ENCODE measurements at regions of chr1 and their contacts with region 1.

Region 1: GRCh38 chr1:150578965-150579798 is at the start of gene MCL1:
- DNase-seq: peak; percentile 94

Region 2: DNA sequence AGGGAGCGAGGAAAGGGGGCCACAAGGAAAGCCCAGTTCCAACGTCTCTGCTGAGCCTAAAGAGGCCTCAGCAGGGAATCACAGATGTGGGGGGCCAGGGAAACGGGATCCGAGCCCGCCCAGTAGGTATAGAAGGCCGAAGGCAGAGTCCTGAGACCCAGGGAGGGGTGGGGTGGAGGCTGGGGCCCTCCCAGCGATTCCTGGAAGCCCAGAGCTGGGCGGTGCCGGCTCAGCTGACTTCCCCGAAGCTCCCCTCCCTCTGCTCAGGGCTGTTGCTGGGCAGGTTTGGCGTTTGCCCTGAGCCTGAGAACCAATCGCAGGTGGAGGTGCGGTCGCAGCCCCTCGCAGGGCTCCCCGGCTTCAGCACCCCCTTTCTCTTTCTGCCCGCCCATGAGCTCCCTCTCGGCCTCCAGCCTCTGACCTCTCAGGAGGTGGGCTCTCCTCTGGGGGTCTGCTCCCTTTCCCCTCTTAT is 17.2 kb before region 1 on chr1:
- CTCF ChIA-PET with region 1: interaction called, 6 read pairs
- POLR2A ChIA-PET with region 1: interaction called, 260 read pairs
- DNase-seq: peak; percentile 89

Region 3: GRCh38 chr1:150596095-150596892 is 17.1 kb after region 1 on chr1:
- CTCF ChIA-PET with region 1: no interaction called
- POLR2A ChIA-PET with region 1: interaction called, 42 read pairs
- DNase-seq: no peak

Region 4: DNA sequence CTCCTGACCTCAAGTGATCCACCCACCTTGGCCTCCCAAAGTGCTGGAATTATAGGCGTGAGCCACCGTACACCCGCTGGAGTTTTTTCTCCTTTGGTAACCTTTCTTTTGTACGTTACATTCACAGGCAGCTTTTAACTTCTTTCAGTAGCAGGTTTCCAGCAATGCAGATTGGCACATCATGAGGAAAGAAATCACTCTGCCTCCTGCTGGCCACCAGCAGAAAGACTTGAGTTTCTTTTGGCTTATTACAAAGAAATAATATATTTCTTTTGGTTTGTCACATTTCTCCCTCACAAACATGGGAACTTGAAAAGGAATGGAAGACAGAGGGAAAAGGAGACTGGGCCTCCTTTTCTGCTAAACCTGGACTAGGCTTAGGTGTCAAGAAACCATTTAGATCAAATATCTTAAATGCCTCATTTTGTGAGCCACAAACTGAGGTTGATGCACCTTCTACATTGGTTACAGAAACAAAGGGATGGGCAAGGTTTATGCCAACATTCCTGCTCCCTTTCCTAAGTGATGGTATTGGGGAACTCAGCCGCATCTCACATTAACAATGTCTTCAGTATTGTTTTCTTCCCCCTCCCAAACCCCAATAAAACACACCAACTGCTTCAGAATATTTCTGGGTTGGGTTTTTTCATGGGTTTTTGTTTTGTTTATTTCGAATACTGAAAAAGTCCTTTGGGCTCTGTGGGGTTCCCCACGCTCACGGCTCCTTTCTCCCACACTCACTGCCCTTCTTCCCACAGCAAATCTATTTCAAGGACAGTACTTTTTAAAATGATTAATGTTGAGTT is 42.5 kb after region 1 on chr1:
- CTCF ChIA-PET with region 1: interaction called, 3 read pairs
- POLR2A ChIA-PET with region 1: interaction called, 53 read pairs
- DNase-seq: peak; percentile 54

Region 5: GRCh38 chr1:150696590-150697524 is 117.7 kb after region 1 on chr1 and contains the start of gene GOLPH3L:
- CTCF ChIA-PET with region 1: no interaction called
- POLR2A ChIA-PET with region 1: interaction called, 20 read pairs
- DNase-seq: peak; percentile 95

Region 6: GRCh38 chr1:150876119-150876454 is 296.9 kb after region 1 on chr1:
- CTCF ChIA-PET with region 1: no interaction called
- POLR2A ChIA-PET with region 1: no interaction called
- DNase-seq: peak; percentile 67

Region 7: DNA sequence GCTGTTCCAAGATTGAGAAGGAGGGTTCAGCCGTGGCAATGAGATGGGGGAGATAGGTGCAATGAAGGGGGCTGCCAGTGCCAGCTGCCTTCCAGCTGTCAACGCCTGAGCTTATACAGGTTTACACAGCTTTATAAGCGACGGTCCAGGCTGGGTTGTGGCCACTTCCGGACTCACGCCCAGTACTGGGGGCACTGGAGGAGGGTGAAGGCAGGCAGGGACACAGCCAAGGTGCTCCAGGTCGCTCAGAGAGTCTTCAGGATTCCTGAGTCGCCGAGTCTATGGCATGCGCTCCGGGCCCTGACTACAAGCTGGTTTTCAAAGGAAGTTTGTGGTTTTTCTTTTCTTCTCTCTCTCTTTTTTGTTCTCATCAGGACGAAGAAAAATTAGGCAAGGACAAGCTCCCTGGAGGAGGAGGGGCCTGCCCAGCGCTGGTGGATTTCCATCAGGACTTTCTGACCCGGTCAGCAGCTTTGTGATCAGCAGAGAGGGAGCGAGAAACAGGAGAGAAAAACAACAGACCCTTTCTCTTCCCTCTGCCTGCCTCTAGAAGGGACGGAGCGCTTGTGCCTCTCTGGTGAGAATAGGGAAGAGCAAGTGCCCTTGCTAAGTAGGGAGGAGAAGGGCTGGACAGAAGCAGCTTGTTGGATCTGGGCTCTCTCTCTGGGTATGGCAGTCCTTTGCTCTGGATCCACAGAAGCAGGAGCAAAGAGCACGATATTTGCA is 427.3 kb after region 1 on chr1 and contains the start of gene MINDY1:
- CTCF ChIA-PET with region 1: no interaction called
- POLR2A ChIA-PET with region 1: interaction called, 15 read pairs
- DNase-seq: peak; percentile 87